ENCODE measurements at regions of chr13 and their contacts with region 1.

Region 1: GRCh38 chr13:99288089-99288488 is 19.1 kb downstream of the GPR183 start:
- DNase-seq: no peak
- H3K4me3 Mint-ChIP-seq: peak overlapping the region; percentile 6
- H3K27ac Mint-ChIP-seq: peak overlapping the region; percentile 50
- H3K4me1 Mint-ChIP-seq: peaks cover 61% of the 10 kb centered on the region
- H3K27me3 Mint-ChIP-seq: no peaks in the 10 kb centered on the region

Region 2: DNA sequence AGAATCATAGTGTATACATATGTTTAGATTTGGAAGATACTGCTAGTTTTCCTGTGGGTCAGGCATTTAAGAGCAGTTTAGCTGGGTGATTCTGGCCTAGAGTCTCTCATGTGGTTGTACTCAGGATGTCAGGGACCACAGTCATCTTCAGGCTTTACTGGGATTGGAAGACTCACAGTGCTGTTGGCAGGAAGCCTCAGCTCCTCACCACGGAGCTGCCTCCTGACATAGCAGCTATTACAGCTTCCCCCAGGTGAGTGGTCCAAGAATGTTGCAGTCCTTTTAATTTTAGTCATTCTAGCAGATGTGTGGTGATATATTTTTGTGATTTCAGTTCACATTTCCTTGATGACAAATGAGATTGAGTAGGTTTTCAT is 13.0 kb before region 1 on chr13:
- intact Hi-C with region 1: loop called (anchors 1 kb)
- DNase-seq: no peak
- H3K4me3 Mint-ChIP-seq: peak overlapping the region; percentile 5
- H3K27ac Mint-ChIP-seq: peak overlapping the region; percentile 64
- H3K4me1 Mint-ChIP-seq: peaks cover 82% of the 10 kb centered on the region
- H3K27me3 Mint-ChIP-seq: no peaks in the 10 kb centered on the region